ENCODE measurements at regions of chr1 and their contacts with region 1.

Region 1: DNA sequence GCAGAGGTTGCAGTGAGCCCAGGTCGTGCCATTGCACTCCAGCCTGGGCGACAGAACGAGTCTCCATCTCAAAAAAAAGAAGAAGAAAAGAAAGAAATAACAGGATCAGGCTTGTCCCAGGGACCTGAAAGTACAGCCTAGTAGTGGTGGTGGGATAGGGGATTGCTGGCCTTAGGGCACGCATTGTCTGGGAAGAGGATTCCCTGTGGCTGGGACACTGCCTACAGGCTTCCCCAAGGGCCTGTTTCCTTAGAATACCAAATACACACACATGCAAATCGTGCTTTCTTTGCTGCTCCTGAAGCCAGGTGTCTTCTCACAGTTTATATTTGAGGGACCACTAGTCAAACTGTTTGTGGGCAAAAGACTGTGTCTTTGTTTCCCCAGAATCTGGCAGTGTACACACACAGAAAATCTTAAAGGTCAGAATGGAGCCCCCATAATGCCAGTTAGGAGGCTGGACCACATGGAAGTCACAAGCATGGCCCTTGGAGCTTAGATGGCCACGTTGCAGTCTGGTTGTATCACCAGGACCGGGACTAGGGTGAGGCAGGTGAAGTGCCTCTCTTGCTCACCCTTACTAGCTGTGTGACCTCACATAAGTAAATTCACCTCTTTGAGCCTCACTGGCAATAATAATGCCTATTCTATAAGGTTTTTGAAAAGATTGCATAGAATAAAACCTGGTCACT is 12.7 kb upstream of the ASAP3 start:
- H3K4me3 ChIP-seq: no peak overlapping the region
- H3K27ac ChIP-seq: no peak overlapping the region
- H3K4me1 ChIP-seq: no peaks in the 10 kb centered on the region
- CTCF ChIP-seq: no peak

Region 2: DNA sequence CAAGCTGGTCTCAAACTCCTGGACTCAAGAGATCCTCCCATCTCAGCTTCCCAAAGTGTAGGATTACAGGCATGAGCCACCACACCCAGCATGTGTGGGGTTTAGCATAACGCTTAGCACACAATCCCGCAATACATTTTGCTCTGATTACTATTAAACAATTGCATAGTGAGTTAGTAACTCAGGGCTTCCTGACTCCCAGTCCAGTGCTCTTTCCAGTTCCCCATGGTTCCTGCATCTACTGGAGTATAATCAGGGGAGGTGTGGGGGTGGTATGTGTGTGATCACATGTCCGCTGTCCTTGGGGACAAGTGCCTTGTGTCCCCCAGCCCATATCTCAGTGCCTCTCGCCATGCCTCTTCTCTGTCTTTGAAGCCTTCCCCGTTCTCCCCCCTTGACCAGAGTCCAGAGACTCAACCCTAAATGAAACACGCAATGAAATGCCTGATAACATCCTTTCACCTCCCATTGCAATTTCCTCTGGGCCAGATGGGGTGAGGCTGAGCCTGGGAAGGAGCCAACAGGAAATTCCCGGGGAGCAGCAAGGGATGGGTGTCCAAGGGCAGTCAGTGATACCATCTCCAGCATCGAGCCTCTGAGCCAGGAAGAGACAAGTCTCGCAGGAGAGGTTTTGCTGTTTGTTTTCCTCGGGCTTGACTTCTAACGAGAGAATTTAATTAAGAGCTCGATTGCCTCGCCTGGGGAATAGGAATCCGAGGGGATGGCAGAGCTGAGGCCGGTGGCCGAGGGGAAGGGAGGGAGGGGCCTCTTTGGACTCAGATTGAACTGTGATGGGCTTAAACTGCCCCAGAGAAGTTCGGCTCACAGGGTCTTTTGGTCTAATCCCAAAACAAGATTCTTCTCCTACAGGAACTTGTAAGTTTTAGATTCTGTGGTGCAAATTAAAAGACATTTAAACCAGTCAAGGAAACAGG is 271.7 kb before region 1 on chr1:
- CTCF ChIA-PET with region 1: no interaction called
- POLR2A ChIA-PET with region 1: no interaction called
- H3K4me3 ChIP-seq: no peak overlapping the region
- H3K27ac ChIP-seq: no peak overlapping the region
- H3K4me1 ChIP-seq: no peaks in the 10 kb centered on the region
- CTCF ChIP-seq: no peak

Region 3: DNA sequence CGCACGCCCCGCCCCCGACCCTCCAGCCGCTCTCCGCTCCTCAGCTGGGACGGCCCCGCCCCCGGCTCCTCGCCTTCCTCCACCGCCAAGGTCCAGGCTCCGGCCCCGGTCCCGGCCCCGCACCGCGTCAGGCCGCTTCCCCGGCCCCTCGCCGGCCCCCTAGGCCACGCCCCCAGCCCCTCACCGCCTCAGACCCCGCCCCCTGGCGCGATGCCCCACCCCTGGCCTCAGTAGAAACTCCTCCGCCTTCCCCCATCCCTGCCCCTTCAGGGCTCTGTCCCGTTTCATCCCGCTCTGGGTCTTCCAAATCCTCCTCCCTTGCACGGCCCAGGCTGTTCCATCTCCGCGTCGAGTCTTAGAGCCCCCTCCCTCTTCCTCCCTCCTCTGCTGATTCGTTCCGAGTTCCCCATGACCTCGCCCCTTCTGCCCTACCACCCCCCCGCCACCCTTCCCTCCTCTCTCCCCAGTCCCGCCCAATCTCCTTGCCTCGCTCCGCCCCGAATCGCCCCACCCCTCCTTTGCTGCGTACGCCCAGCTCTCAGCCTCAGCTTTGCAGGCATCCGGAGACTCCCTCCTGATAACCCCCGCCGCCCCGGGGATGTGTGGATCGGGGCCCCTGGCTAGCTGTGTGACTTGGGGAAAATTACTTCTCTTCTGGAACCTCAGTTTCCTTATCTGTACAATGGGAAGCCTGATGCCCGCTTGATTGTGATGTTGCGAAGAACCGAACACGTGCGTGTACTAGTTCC is 12.2 kb before region 1 on chr1:
- CTCF ChIA-PET with region 1: interaction called, 72 read pairs
- POLR2A ChIA-PET with region 1: interaction called, 6 read pairs
- H3K4me3 ChIP-seq: peak overlapping the region; percentile 63
- H3K27ac ChIP-seq: no peak overlapping the region
- H3K4me1 ChIP-seq: no peaks in the 10 kb centered on the region
- CTCF ChIP-seq: no peak

Region 4: GRCh38 chr1:23514111-23514679 is 17.6 kb after region 1 on chr1:
- CTCF ChIA-PET with region 1: interaction called, 61 read pairs
- POLR2A ChIA-PET with region 1: interaction called, 6 read pairs
- H3K4me3 ChIP-seq: no peak overlapping the region
- H3K27ac ChIP-seq: no peak overlapping the region
- H3K4me1 ChIP-seq: no peaks in the 10 kb centered on the region
- CTCF ChIP-seq: no peak

Region 5: GRCh38 chr1:23530747-23531561 is 34.3 kb after region 1 on chr1 and contains the start of gene E2F2:
- CTCF ChIA-PET with region 1: interaction called, 36 read pairs
- POLR2A ChIA-PET with region 1: interaction called, 13 read pairs
- H3K4me3 ChIP-seq: peak within 1 kb of the TSS; percentile 69
- H3K27ac ChIP-seq: peak within 1 kb of the TSS; percentile 89
- H3K4me1 ChIP-seq: peaks cover 2% of the 10 kb centered on the region; the same call in 1 of the 2 replicates
- CTCF ChIP-seq: peak; percentile 84

Region 6: GRCh38 chr1:23657659-23658275 is 161.1 kb after region 1 on chr1:
- CTCF ChIA-PET with region 1: interaction called, 12 read pairs
- POLR2A ChIA-PET with region 1: no interaction called
- H3K4me3 ChIP-seq: no peak overlapping the region
- H3K27ac ChIP-seq: no peak overlapping the region
- H3K4me1 ChIP-seq: no peaks in the 10 kb centered on the region
- CTCF ChIP-seq: peak; percentile 60

Region 7: DNA sequence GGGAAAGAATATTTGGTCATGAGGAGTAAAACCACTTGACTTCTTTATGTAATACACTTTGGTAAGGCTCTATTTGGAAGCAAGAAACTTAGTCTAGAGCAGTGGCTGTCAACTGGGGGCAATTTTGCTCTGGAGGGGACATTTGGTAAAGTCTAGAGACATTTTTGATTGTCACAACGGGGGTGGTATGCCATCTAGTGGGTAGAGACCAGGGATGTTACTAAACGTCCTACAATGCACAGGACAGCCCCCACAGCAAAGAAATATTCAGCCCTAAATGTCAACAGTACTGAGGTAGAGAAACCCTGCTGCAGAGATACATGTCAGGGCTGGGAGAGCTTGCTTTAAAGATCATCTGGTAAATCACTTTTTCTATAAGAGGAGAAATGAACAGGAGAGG is 357.9 kb after region 1 on chr1:
- CTCF ChIA-PET with region 1: no interaction called
- POLR2A ChIA-PET with region 1: no interaction called
- H3K4me3 ChIP-seq: no peak overlapping the region
- H3K27ac ChIP-seq: no peak overlapping the region
- H3K4me1 ChIP-seq: no peaks in the 10 kb centered on the region
- CTCF ChIP-seq: peak; percentile 60